ENCODE measurements at regions of chr3 and their contacts with region 1.

Region 1: GRCh38 chr3:155554777-155555451 is 190.0 kb downstream of the PLCH1 start:
- DNase-seq: peak; percentile 73
- H3K4me3 Mint-ChIP-seq: peak overlapping the region; percentile 57
- H3K27ac Mint-ChIP-seq: peak overlapping the region; percentile 90
- H3K4me1 Mint-ChIP-seq: peaks cover 49% of the 10 kb centered on the region
- H3K27me3 Mint-ChIP-seq: no peaks in the 10 kb centered on the region
- CTCF ChIP-seq: no peak

Region 2: DNA sequence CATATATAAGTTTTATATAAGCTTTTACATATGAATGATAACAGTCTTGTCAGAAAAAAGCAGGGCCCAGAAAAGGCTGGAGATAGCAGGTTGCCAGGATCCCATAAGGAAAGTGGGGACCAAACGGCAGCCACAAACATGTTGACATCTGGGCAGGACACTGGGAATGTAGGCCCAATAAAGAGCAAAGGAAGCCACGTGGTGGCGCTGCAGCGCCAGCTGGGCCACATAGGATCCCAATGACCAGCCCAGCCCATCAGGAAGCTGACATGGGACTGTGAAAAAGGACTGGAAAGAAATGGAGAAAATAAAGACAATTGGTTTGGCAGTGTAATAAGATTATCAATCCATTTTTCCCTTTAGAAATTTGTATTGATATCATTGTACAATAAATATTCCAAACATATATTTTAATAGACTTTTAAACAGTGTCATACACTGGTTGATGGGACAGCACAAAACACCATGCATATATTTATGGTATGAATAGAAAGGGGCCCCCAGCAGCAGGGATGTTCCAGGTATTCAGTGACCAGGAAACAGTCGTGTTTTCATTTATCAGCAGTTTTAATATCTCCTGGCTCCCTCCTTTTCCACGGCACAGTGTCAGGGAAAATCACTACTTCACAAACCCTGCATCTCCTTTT is 172.4 kb before region 1 on chr3:
- CTCF ChIA-PET with region 1: interaction called, 3 read pairs
- intact Hi-C with region 1: loop called (anchors 2 kb)
- DNase-seq: peak; percentile 89
- H3K4me3 Mint-ChIP-seq: no peak overlapping the region
- H3K27ac Mint-ChIP-seq: no peak overlapping the region
- H3K4me1 Mint-ChIP-seq: no peaks in the 10 kb centered on the region
- H3K27me3 Mint-ChIP-seq: no peaks in the 10 kb centered on the region
- CTCF ChIP-seq: peak; percentile 93

Region 3: DNA sequence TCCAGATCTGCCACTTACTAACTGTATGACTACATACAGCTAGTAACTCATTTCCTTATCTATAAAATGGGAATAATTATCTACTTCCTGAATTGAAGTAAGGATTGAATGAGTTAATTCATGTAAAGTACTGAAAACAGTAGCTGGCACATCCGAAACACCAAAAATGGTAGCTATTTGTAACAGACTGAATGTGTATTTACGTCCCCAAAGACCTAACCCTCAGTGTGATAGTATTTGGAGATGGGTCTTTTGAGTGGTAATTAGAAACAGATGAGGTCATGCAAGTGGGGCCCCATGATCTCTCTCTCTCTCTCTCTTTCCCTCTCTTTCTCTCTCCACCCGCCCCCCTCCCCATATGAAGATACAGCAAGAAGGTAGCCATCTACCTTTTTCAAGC is 43.8 kb after region 1 on chr3:
- CTCF ChIA-PET with region 1: interaction called, 12 read pairs
- intact Hi-C with region 1: no loop called
- DNase-seq: no peak
- H3K4me3 Mint-ChIP-seq: no peak overlapping the region
- H3K27ac Mint-ChIP-seq: no peak overlapping the region
- H3K4me1 Mint-ChIP-seq: peaks cover 28% of the 10 kb centered on the region
- H3K27me3 Mint-ChIP-seq: no peaks in the 10 kb centered on the region
- CTCF ChIP-seq: no peak

Region 4: DNA sequence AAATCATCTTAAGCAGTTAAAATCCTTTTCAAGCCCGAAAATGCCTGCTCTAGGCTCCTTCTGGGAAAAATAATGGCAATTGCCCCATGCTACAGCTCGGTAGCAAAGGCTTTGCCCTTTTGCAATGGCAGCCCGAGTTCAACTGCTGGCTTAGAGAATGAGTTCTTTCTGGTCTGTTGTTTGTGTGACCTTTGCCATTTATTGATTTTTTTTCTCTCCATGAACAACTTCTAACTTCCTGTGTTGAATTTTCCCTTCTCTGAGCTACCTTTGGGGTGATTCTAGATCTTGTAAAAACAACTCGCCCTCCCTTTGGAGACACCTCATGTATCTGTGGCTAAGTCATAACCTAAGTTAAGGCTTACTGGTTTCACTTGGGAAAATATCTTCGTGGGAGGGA is 50.7 kb after region 1 on chr3:
- CTCF ChIA-PET with region 1: no interaction called
- intact Hi-C with region 1: loop called (anchors 5 kb)
- DNase-seq: peak; percentile 43
- H3K4me3 Mint-ChIP-seq: peak overlapping the region; percentile 28
- H3K27ac Mint-ChIP-seq: peak overlapping the region; percentile 67
- H3K4me1 Mint-ChIP-seq: peaks cover 43% of the 10 kb centered on the region
- H3K27me3 Mint-ChIP-seq: no peaks in the 10 kb centered on the region
- CTCF ChIP-seq: no peak

Region 5: GRCh38 chr3:155664925-155665695 is 110.2 kb after region 1 on chr3:
- CTCF ChIA-PET with region 1: no interaction called
- intact Hi-C with region 1: loop called (anchors 1 kb)
- DNase-seq: peak; percentile 67
- H3K4me3 Mint-ChIP-seq: peak overlapping the region; percentile 47
- H3K27ac Mint-ChIP-seq: peak overlapping the region; percentile 70
- H3K4me1 Mint-ChIP-seq: peaks cover 66% of the 10 kb centered on the region
- H3K27me3 Mint-ChIP-seq: no peaks in the 10 kb centered on the region
- CTCF ChIP-seq: no peak

Region 6: GRCh38 chr3:155870133-155870944 is 315.4 kb after region 1 on chr3 and contains the start of gene GMPS:
- CTCF ChIA-PET with region 1: no interaction called
- intact Hi-C with region 1: loop called (anchors 5 kb)
- DNase-seq: peak; percentile 100
- H3K4me3 Mint-ChIP-seq: peak within 1 kb of the TSS; percentile 97
- H3K27ac Mint-ChIP-seq: peak within 1 kb of the TSS; percentile 86
- H3K4me1 Mint-ChIP-seq: peaks cover 37% of the 10 kb centered on the region
- H3K27me3 Mint-ChIP-seq: no peaks in the 10 kb centered on the region
- CTCF ChIP-seq: peak; percentile 21
- total RNA-seq, gene GMPS: 171 and 194 TPM in 2 replicates

Measured in Calu3 (cell line).